H1 (cell line): ENCODE measurements at regions of chr19 and their contacts with region 1.

Region 1: GRCh38 chr19:49148784-49149651 is 6.2 kb downstream of the HRC start:
- DNase-seq: peak in 1 of 2 experiments; percentile 100
- H3K4me3 ChIP-seq: peak overlapping the region; percentile 69 to 97 (median 90)
- H3K27ac ChIP-seq: peak overlapping the region; percentile 65; the same call in 1 of the 2 replicates
- H3K4me1 ChIP-seq: peaks cover 0 to 22% (median 9%) of the 10 kb centered on the region in 4 experiments; a peak in 6 of 7 replicates
- H3K27me3 ChIP-seq: peaks cover 0 to 5% (median 2%) of the 10 kb centered on the region in 4 experiments; a peak in 2 of 7 replicates
- CTCF ChIP-seq: no peak
- EP300 ChIP-seq: peak in 1 of 2 experiments; percentile 95; a peak in 1 of 3 replicates
- POLR2A ChIP-seq: no peak; a peak in 2 of 3 replicates
- RAD21 ChIP-seq: no peak

Region 2: DNA sequence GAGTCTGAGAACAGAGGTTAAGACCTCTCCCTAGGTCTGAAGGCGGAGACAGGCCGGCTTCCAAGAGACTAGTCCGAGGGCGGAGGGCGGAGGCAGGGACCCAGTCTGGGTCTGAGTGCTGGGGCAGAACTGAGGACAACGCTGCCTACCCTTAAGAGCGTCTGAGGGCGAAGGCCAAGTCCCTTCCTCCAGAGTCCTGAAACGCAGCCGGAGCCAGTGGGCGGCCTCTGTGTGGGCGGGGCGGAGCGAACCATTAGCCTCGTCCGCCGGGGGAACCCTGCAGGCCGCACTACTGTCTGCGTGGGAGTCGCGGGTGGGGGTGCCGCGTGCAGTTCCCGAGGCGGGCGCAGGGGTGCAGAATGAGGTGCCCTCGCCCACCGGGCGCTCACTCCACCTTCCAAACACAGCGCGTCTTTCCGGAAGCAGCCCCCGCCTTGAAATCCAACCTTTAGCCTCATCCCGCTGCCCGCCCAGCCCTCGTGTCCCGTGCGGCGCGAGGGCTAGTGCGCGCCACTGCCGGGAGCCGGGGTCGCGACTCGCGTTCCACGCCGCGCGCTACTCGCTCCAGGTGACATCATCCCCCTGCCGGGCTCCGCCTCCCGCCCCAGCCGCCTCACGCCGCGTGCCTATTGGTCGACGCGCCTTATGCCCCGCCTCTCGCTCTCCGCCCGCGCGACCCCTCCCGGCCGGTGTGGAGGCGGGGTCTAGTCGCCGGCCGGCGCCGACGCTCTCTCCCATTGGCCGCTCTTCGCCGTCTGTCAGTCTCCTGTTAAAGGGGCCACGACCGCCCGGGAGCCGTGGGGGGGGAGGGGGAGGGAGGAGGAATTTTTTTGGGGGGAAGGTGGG is 30.2 kb before region 1 on chr19 and contains the start of gene C19orf73:
- CTCF ChIA-PET with region 1: interaction called, 17 read pairs
- POLR2A ChIA-PET with region 1: interaction called, 24 read pairs
- DNase-seq: peak in 1 of 2 experiments; percentile 94
- H3K4me3 ChIP-seq: peak within 1 kb of the TSS; percentile 64 to 86 (median 78)
- H3K27ac ChIP-seq: peak within 1 kb of the TSS; percentile 57; the same call in 1 of the 2 replicates
- H3K4me1 ChIP-seq: peaks cover 0 to 5% (median 4%) of the 10 kb centered on the region in 4 experiments; a peak in 4 of 7 replicates
- H3K27me3 ChIP-seq: peaks cover 8 to 19% (median 17%) of the 10 kb centered on the region in 4 experiments
- CTCF ChIP-seq: peak in 1 of 3 experiments; percentile 5; a peak in 1 of 4 replicates
- EP300 ChIP-seq: peak in 1 of 2 experiments; percentile 76; a peak in 1 of 3 replicates
- POLR2A ChIP-seq: peak in 1 of 2 experiments; percentile 24; a peak in 1 of 3 replicates
- RAD21 ChIP-seq: no peak; a peak in 1 of 4 replicates
- total RNA-seq, gene C19orf73: 1.2 and 2.5 TPM in 2 replicates

Region 3: GRCh38 chr19:49127674-49128544 is 21.1 kb before region 1 on chr19:
- CTCF ChIA-PET with region 1: interaction called, 99 read pairs
- POLR2A ChIA-PET with region 1: interaction called, 47 read pairs
- DNase-seq: peak in 1 of 2 experiments; percentile 97
- H3K4me3 ChIP-seq: peak overlapping the region; percentile 56 to 74 (median 66)
- H3K27ac ChIP-seq: peak overlapping the region; percentile 48; the same call in 1 of the 2 replicates
- H3K4me1 ChIP-seq: peaks cover 4 to 19% (median 8%) of the 10 kb centered on the region in 4 experiments
- H3K27me3 ChIP-seq: no peaks in the 10 kb centered on the region; a peak in 2 of 7 replicates
- CTCF ChIP-seq: peak in 1 of 3 experiments; percentile 1; a peak in 1 of 4 replicates
- EP300 ChIP-seq: no peak
- POLR2A ChIP-seq: peak in 1 of 2 experiments; percentile 69; a peak in 2 of 3 replicates
- RAD21 ChIP-seq: no peak

Region 4: GRCh38 chr19:49133621-49134454 is 15.2 kb before region 1 on chr19:
- CTCF ChIA-PET with region 1: interaction called, 99 read pairs
- POLR2A ChIA-PET with region 1: interaction called, 47 read pairs
- DNase-seq: peak in 1 of 2 experiments; percentile 90
- H3K4me3 ChIP-seq: peak overlapping the region in 3 of 4 experiments; percentile 21 to 55 (median 27); a peak in 4 of 8 replicates
- H3K27ac ChIP-seq: no peak overlapping the region
- H3K4me1 ChIP-seq: peaks cover 4 to 14% (median 6%) of the 10 kb centered on the region in 4 experiments; a peak in 6 of 7 replicates
- H3K27me3 ChIP-seq: no peaks in the 10 kb centered on the region
- CTCF ChIP-seq: no peak
- EP300 ChIP-seq: no peak
- POLR2A ChIP-seq: no peak
- RAD21 ChIP-seq: no peak

Region 5: GRCh38 chr19:49368711-49369358 is 219.8 kb after region 1 on chr19:
- CTCF ChIA-PET with region 1: no interaction called
- POLR2A ChIA-PET with region 1: no interaction called
- DNase-seq: no peak
- H3K4me3 ChIP-seq: no peak overlapping the region
- H3K27ac ChIP-seq: no peak overlapping the region
- H3K4me1 ChIP-seq: peaks cover 0 to 6% (median 2%) of the 10 kb centered on the region in 4 experiments; a peak in 5 of 7 replicates
- H3K27me3 ChIP-seq: no peaks in the 10 kb centered on the region
- CTCF ChIP-seq: no peak
- EP300 ChIP-seq: no peak
- POLR2A ChIP-seq: no peak
- RAD21 ChIP-seq: no peak